OCI-LY7 (cell line): ENCODE measurements at regions of chr3 and their contacts with region 1.

Region 1: GRCh38 chr3:114454551-114455251 is 160.9 kb downstream of the TIGIT start:
- DNase-seq: peak; percentile 40
- H3K4me3 ChIP-seq: peak overlapping the region; percentile 70
- H3K27ac ChIP-seq: peak overlapping the region; percentile 40
- H3K4me1 ChIP-seq: peaks cover 77% of the 10 kb centered on the region
- CTCF ChIP-seq: peak; percentile 30; the same call in 1 of the 2 replicates

Region 2: DNA sequence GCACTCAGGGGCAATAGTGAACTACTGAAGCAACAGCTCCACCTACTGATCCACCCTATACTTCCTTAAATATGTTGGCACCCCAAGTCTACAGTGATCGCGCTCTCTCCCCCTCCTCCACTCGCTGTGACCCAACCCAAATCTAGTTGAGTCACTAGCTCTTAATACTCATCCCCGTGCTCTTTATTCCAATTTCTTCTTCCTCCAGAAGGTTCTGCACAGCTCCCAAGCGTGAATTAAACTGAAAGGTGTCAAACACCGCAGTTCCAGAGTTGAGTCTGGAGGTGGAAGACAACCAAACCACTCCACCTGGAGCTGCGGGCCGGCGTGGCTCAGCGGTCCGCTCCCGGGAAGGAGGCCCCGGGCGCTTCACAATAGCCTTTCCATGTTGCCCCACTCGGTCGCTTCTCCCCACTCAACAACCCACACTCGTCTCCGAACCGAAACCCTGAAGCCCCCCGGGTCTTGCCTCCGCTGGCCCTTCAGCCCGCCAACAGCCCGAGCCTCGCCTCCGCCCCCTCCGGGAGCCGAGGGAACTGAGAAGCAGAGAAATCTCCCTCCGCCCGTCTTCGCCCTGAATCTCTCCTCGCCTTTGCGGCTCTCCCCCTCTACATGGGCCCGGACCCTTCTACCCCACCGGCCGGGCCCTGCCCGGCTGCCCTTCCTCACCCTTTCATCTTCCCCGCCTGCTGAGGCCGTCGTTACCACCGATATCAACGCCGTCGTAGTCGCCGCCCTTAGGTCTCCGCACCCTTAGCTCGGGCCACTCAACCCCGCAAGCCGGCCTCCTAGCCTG is 709.2 kb before region 1 on chr3:
- CTCF ChIA-PET with region 1: no interaction called
- POLR2A ChIA-PET with region 1: no interaction called
- intact Hi-C with region 1: loop called (anchors 5 kb)
- DNase-seq: peak; percentile 88
- H3K4me3 ChIP-seq: peak overlapping the region; percentile 83
- H3K27ac ChIP-seq: peak overlapping the region; percentile 95
- H3K4me1 ChIP-seq: peaks cover 56% of the 10 kb centered on the region
- CTCF ChIP-seq: peak; percentile 85

Region 3: GRCh38 chr3:113947372-113948014 is 507.2 kb before region 1 on chr3 and contains the start of gene ZDHHC23:
- CTCF ChIA-PET with region 1: no interaction called
- POLR2A ChIA-PET with region 1: no interaction called
- intact Hi-C with region 1: loop called (anchors 2 kb)
- DNase-seq: peak; percentile 75
- H3K4me3 ChIP-seq: peak within 1 kb of the TSS; percentile 84
- H3K27ac ChIP-seq: peak within 1 kb of the TSS; percentile 58
- H3K4me1 ChIP-seq: peaks cover 27% of the 10 kb centered on the region
- CTCF ChIP-seq: no peak
- total RNA-seq, gene ZDHHC23: 36.9 and 37.5 TPM in 2 replicates

Region 4: DNA sequence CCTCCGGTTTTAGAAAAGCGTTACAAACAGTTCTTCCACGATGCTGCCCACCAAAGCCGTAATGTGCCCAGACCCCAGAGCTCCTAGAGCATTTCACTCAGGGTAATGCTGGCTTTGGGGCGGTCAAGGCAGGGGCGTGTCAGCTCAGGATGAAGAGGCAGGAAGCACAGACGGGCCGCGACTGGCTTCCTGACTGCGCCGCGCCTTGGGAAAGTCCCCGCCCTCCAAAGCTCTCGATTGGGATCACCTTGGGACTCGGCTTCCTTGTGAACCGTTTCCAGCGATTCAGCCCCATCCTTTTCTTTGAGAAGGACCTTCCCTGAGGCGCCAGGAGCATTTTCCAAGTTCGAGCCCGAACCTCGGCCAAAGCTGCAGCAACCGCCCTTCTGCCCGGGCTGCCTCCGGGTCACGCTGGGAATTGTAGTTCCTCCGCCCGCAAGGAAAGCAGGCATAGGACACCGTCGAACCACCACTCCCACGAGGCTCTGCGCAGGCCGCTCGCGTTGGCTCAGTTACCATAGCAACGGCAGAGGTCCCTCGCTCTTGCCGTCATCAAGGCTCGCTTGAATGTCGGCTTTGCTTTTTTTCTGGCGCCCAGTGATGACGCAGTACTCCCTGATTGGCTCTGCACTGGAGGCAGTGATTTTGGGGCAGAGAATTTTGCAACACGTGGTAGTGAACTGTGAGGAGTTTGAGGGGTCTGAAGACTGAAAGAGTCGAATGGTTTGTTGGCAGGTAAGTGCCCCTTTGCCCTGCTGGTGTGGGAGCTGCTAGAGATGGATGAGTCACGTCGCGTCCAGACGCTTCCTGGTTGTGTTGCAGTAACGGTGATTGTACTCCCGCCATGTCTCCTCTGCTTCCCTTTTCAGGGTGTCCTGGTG is 398.3 kb before region 1 on chr3 and contains the starts of genes CCDC191 and QTRT2:
- CTCF ChIA-PET with region 1: no interaction called
- POLR2A ChIA-PET with region 1: interaction called, 3 read pairs
- intact Hi-C with region 1: loop called (anchors 5 kb)
- DNase-seq: peak; percentile 100
- H3K4me3 ChIP-seq: peak within 1 kb of the TSS; percentile 89
- H3K27ac ChIP-seq: peak within 1 kb of the TSS; percentile 69
- H3K4me1 ChIP-seq: peaks cover 40% of the 10 kb centered on the region
- CTCF ChIP-seq: no peak
- total RNA-seq, gene CCDC191: 5.0 and 5.4 TPM in 2 replicates
- total RNA-seq, gene QTRT2: 43.1 and 47.4 TPM in 2 replicates

Region 5: DNA sequence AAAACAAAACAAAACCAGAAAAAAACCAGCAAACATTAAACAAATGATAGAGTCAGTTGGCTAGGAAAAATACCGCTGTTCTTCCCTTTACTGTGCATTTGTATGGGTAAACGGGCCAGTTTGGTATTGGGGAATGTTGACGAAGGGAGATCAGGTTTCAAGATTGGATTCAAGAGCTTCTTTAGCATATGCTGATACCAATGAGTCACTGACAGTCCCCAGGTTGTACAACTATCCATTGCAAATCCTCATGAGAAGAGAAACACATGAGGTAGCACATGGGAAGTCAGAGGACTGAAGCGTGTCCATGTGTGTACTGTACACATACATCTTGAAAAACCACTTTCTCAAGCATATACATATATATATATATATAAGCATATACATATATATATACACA is 135.2 kb before region 1 on chr3:
- CTCF ChIA-PET with region 1: no interaction called
- POLR2A ChIA-PET with region 1: no interaction called
- intact Hi-C with region 1: no loop called
- DNase-seq: no peak
- H3K4me3 ChIP-seq: no peak overlapping the region
- H3K27ac ChIP-seq: no peak overlapping the region
- H3K4me1 ChIP-seq: no peaks in the 10 kb centered on the region
- CTCF ChIP-seq: no peak

Region 6: GRCh38 chr3:114432310-114432709 is 22.4 kb before region 1 on chr3:
- CTCF ChIA-PET with region 1: interaction called, 4 read pairs
- POLR2A ChIA-PET with region 1: interaction called, 98 read pairs
- intact Hi-C with region 1: no loop called
- DNase-seq: no peak
- H3K4me3 ChIP-seq: no peak overlapping the region
- H3K27ac ChIP-seq: no peak overlapping the region
- H3K4me1 ChIP-seq: peaks cover 11% of the 10 kb centered on the region
- CTCF ChIP-seq: no peak

Region 7: DNA sequence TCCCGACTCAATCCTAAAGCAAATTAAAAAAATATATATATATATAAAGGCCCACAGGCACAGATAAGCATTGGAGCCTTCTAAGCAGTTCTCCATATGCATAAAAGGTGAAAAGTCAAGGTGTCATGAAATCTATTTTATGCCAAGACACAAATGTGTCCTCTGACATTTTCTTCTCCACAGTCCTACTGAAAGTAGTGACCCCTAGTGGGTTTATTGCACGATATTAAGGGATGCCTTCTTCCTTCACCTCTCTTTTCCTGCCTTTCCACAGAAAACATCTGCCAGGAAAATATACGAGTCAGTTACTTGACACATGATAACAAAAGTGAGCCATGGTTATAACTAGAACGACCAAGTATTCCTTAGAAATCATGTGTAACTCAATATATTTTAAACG is 142.3 kb after region 1 on chr3:
- CTCF ChIA-PET with region 1: no interaction called
- POLR2A ChIA-PET with region 1: no interaction called
- intact Hi-C with region 1: no loop called
- DNase-seq: no peak
- H3K4me3 ChIP-seq: no peak overlapping the region
- H3K27ac ChIP-seq: no peak overlapping the region
- H3K4me1 ChIP-seq: no peaks in the 10 kb centered on the region
- CTCF ChIP-seq: peak; percentile 43; the same call in 1 of the 2 replicates

Region 8: DNA sequence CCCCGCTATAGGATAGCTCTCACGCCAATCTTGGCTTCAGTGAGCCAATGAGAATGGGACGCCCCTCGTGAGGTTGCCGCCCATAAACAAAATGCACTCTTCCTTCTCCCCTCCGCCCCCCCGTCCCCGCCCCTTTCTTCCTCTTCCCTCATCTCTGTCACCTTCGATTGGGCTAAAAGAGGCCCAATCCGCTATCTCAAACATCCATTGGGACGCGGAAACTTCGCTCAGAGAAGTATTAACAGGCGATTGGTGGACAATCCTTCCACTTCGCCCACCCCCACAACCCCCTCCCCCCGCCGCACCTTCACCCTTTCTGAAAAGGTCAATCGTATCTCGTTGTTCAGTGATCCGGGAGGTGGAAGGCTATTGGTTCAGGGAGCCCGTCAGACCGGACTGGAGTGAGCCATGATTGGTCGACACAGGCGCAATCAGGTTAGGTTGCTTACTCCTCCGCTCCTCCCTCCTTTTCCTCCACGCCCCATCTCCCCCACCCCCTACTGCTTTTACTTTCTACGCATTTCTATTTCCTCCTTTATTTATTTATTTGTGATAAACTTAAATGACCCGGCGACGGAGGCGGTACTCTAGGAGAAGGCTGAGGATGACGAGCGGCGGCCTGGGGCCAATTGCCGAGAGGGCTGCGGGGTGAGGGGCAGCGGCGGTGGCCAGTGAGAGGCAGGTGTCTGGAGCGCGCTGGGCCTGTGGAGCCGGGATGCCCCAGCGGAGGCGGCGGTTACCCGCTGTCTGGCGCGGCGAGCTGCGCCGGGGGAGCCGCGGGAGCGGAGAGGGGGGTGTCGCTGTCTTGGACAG is 692.8 kb after region 1 on chr3:
- CTCF ChIA-PET with region 1: no interaction called
- POLR2A ChIA-PET with region 1: interaction called, 8 read pairs
- intact Hi-C with region 1: loop called (anchors 2 kb)
- DNase-seq: peak; percentile 99
- H3K4me3 ChIP-seq: peak overlapping the region; percentile 91
- H3K27ac ChIP-seq: peak overlapping the region; percentile 64
- H3K4me1 ChIP-seq: peaks cover 17% of the 10 kb centered on the region
- CTCF ChIP-seq: no peak